ENCODE measurements at regions of chr5 and their contacts with region 1.

Region 1: DNA sequence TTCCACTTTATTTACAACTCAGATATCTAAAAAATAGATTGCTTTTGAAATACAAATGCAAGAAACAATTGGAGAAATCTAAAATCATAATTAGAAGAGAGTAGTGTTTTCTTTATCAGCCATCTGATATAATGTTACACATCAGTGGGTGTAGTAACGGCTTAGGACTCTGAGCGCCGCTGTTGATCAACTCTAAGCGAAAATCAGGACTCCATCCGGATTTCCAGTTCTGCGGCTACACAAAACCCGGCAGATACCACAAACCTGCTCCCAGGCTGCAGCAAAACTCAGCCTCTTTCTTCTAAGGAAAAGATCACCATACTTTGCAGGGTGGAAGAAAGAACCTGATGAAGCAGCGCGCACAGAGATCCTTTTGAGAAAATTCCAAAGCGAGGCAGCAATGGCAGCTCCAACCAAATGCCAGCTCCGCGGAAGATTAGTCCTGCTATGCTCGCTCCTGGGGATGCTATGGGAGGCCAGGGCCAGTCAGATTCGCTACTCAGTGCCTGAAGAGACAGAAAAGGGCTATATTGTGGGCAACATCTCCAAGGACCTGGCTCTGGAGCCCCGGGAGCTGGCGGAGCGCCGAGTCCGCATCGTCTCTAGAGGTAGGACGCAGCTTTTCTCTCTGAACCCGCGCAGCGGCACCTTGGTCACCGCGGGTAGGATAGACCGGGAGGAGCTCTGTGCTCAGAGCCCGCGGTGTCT is at the start of gene PCDHGA9:
- DNase-seq: no peak
- H3K4me3 ChIP-seq: no peak within 1 kb of the TSS
- H3K27ac ChIP-seq: no peak within 1 kb of the TSS
- H3K4me1 ChIP-seq: no peaks in the 10 kb centered on the region
- H3K27me3 ChIP-seq: no peaks in the 10 kb centered on the region
- CTCF ChIP-seq: peak in 2 of 3 experiments; percentile 21 to 35; a peak in 3 of 4 replicates
- EP300 ChIP-seq: no peak
- POLR2A ChIP-seq: no peak
- RAD21 ChIP-seq: peak; percentile 33 to 46
- total RNA-seq, gene PCDHGA9: 1.1 and 1.2 TPM in 2 replicates

Region 2: DNA sequence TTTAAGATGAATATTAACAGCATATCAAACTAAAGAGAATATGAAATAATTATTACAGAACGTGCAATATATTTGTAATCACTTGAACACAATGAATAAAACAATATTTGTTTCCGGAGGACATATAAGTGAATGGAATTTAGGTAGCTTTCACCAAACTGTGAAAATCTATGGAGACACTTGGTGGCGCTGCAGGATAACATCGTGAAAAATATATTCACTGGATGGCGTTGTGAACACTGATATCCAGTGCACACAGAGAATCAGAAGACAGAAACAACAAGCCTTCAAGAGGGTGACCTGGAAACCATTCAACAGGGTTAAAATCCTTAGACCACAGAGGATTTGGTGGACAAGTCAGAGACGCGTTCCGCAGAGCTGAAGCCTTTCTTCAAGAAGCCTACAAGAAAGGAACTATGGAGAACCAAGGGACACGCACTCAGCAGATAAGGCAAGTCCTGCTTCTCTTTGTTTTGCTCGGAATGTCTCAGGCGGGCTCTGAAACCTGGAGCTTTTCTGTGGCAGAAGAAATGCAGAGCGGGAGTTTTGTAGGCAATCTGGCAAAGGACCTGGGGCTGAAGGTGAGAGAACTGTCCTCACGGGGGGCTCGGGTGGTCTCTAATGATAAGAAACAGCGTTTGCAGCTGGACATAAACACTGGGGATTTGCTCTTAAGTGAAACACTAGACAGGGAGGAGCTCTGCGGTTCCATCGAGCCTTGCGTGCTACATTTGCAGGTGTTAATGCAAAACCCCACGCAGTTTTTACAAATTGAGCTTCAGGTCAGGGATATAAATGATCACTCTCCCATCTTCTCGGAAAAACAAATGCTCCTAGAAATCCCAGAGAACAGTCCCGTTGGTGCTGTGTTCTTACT is 203.1 kb before region 1 on chr5 and contains the start of gene PCDHB11:
- CTCF ChIA-PET with region 1: interaction called, 18 read pairs
- POLR2A ChIA-PET with region 1: no interaction called
- DNase-seq: no peak
- H3K4me3 ChIP-seq: peak within 1 kb of the TSS in 1 of 4 experiments; percentile 25; a peak in 2 of 8 replicates
- H3K27ac ChIP-seq: no peak within 1 kb of the TSS
- H3K4me1 ChIP-seq: no peaks in the 10 kb centered on the region
- H3K27me3 ChIP-seq: no peaks in the 10 kb centered on the region
- CTCF ChIP-seq: peak in 2 of 3 experiments; percentile 55 to 66; a peak in 3 of 4 replicates
- EP300 ChIP-seq: no peak
- POLR2A ChIP-seq: no peak
- RAD21 ChIP-seq: peak; percentile 68 to 73
- total RNA-seq, gene PCDHB11: 0.86 and 1.4 TPM in 2 replicates

Region 3: DNA sequence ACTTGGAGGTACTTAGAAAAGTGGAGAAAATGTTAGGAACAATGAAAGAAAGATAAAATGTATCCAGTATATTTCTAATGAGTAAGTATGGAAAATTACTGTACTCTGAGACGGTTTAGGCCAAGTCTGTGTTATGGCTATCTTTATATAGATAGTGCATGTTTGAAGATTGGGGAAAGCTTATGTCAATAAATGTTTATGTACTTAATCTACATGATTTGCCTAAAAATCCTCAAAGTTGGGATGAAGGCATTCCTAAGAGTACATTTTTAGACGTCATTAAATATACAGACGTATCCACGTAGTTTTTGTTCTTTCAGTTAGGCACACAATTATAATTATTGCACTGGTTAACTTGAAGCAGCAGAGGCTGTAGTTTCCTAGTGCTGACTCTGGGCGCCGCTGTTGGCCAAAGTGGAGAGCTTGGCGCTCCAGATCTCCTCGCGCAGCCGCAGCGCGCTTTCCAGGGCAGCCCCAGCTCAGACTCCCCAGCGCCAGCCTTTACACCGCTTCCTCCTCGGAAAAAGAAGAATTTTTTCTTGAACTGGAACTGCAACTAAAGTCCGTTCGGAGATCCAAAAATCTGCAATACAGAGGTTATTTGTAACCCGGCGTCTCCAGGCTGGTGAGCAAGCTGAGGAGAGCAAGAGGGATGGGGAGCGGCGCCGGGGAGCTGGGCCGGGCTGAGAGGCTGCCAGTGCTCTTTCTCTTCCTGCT is 15.3 kb before region 1 on chr5 and contains the start of gene PCDHGB4:
- CTCF ChIA-PET with region 1: interaction called, 68 read pairs
- POLR2A ChIA-PET with region 1: interaction called, 4 read pairs
- DNase-seq: peak in 1 of 2 experiments; percentile 82
- H3K4me3 ChIP-seq: peak within 1 kb of the TSS; percentile 42 to 69 (median 44); a peak in 7 of 8 replicates
- H3K27ac ChIP-seq: no peak within 1 kb of the TSS
- H3K4me1 ChIP-seq: no peaks in the 10 kb centered on the region
- H3K27me3 ChIP-seq: no peaks in the 10 kb centered on the region; a peak in 1 of 7 replicates
- CTCF ChIP-seq: peak; percentile 56 to 66 (median 65)
- EP300 ChIP-seq: no peak
- POLR2A ChIP-seq: no peak
- RAD21 ChIP-seq: peak; percentile 59 to 67
- total RNA-seq, gene PCDHGB4: 7.8 and 9.1 TPM in 2 replicates